BJ (cell line): ENCODE measurements at regions of chr3 and their contacts with region 1.

Region 1: GRCh38 chr3:50542177-50543034 is 25.1 kb downstream of the C3orf18 start:
- DNase-seq: no peak
- H3K4me3 ChIP-seq: no peak overlapping the region
- H3K27me3 ChIP-seq: peaks cover 9% of the 10 kb centered on the region
- CTCF ChIP-seq: peak; percentile 93

Region 2: DNA sequence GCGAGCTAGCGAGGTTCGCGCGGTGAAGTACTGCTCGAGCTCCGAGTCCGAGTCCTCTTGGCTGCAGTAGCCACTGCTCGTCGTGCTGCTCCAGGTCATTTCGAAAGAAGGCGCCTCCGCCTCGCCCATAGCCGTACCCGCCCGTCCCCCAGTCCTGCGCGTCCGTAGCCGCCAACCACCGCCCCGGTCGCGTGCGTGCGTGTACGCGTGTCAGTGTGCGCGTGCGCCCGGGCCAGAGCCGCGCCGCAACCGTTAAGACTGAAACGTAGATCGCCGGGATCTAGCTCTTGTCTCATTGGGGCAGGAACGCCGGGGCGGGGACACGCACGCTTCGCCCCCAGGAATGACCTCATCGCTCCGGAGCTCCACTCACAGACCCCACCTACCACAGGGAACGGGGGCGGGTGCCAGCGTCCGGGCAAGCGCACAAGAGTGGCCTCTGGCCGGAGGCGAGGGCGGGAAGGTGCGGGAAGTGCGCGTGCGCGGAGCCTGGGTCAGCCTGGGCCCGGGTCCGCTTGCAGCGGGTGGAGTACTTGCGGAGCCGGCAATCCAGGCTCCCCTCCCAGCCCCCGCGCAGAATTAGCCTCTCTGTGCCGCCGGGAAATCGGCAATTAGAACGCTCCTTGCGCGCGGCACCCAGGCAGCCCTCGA is 205.1 kb before region 1 on chr3:
- CTCF ChIA-PET with region 1: interaction called, 10 read pairs
- POLR2A ChIA-PET with region 1: no interaction called
- DNase-seq: peak; percentile 97
- H3K4me3 ChIP-seq: peak overlapping the region; percentile 89
- H3K27me3 ChIP-seq: no peaks in the 10 kb centered on the region
- CTCF ChIP-seq: no peak

Region 3: DNA sequence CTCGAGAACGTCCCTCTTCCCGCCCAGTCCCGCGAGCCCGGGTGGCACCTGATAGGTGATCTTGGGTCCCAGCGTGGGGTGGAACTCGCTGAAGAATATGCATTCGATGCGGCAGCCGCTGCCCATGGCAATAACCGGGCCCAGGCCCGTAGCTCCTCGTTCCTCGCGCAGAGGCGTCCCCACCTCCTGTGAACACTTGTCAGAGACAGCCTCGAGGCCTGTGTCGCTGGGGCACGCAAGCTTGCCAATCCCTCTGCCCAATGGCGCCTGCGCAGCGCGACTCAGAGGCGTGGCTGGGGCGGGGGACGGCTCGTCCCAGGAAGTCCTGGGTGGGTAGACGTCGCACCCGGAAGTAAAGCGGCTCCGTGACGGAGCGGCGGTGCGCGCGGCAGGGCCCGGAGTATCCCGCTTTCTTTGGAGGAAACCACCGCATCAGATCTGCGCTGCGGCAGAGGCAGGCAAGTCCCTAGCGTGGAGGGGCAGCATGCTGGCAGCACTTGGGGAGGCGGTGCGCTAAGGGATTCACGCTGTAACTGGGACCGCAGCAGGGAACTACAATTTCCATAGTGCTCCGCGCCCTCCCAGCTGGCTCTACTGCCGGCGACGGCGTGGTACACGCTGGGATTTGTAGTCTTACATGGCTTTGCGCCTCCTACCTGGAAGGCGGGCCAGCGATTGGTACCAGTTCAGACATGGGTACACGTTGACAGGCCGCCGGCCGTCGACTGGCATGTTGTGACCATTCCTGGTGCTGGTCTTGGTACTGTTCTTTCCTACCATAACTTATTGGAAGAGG is 191.7 kb before region 1 on chr3 and contains the starts of genes CYB561D2 and NPRL2:
- CTCF ChIA-PET with region 1: interaction called, 98 read pairs
- POLR2A ChIA-PET with region 1: no interaction called
- DNase-seq: peak; percentile 68
- H3K4me3 ChIP-seq: peak within 1 kb of the TSS; percentile 85
- H3K27me3 ChIP-seq: no peaks in the 10 kb centered on the region
- CTCF ChIP-seq: no peak
- polyA plus RNA-seq, gene CYB561D2: 22.3 and 39.3 TPM in 2 replicates
- polyA plus RNA-seq, gene NPRL2: 31.4 and 45.0 TPM in 2 replicates

Region 4: DNA sequence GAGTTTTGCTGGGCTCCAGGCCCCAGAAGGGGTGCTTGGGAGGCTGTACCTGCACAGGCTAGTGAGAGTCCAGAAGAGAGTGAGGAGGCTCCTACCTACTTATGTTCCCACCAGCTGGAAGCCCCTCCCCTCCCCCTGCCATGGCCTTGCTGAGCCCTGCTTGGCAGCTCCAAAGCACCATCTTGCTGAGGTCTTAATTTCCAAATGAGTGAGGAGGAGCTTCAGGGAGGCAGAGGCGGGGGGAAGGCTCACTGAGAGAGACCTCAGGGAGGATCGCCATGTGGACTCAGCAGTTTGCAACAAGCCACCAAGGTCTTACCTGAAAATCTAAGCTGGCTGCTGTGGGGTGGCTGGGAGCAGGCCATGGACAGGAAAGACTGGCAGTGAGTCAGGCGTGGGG is 30.3 kb before region 1 on chr3:
- CTCF ChIA-PET with region 1: interaction called, 22 read pairs
- POLR2A ChIA-PET with region 1: no interaction called
- DNase-seq: no peak
- H3K4me3 ChIP-seq: no peak overlapping the region
- H3K27me3 ChIP-seq: peaks cover 30% of the 10 kb centered on the region
- CTCF ChIP-seq: no peak

Region 5: DNA sequence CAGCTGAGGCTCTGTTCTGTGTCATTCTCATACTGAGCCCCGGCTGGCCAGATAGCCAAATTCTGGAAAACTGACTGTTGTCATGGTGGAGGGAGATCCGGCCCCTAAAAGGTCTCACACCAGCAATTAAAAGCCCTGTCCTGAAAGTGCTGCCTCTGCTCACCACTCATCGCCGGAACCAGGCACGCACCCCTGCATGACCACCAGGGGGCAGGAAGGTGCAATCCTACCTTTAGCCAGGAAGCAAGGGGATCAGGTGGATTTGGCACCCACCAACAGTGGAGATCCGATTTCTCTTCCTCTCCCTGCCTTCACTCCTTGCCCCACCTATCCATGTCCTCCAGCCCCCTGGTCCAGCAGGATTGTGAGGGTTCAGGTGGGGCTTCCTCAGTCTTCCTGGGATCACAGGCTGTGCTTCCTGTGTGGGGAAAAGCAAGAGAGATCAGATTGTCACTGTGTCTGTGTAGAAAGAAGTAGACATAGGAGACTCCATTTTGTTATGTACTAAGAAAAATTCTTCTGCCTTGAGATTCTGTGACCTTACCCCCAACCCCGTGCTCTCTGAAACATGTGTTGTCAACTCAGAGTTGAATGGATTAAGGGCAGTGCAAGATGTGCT is 22.8 kb before region 1 on chr3:
- CTCF ChIA-PET with region 1: interaction called, 46 read pairs
- POLR2A ChIA-PET with region 1: no interaction called
- DNase-seq: no peak
- H3K4me3 ChIP-seq: no peak overlapping the region
- H3K27me3 ChIP-seq: peaks cover 16% of the 10 kb centered on the region
- CTCF ChIP-seq: peak; percentile 94

Region 6: DNA sequence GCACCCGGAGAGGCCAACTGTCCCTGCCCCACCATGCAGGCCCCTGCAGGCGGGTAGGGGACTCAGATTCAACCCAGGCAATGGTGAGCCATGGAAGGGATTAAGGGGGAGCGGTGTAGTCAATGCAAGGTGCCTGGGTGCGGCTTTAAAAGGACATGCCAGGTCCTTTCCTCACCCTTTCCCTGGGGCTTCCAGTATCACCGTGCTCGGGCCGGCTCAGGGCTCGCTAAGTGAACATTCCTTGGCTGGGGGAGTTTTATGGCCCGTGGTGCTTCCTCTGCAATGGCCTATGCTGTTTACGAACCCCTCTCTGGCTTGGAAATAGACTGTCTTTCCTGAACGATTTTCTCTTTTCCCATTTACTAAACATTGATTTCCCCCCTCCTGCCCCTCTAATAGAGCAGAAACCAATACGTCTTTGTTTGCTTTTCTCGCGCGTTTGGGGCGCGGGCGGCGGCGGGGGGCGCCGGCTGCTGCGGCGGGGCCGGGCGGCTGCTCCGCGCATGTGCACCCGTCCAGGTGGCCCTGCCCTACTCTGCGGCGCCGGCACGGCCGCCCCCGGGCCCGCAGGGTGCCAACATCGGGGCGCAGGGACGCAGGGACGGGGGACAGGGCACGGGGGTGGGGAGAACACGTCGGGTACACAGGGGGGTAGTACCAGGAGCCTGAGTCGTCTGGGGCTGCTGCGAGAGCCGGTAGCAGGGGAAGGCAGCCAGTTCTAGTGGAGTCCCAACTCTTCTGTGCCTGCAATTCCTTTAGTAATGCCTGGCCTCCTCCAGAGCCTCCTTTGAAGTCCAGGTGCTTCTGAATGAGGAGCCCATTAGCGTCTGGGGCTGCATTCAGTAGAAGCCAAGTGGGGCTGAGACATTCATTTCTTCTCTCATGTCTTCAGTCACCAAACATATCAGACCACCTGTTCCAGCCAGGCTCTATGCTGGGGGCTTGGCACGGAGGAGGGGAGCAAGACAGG is 12.1 kb before region 1 on chr3:
- CTCF ChIA-PET with region 1: interaction called, 46 read pairs
- POLR2A ChIA-PET with region 1: no interaction called
- DNase-seq: no peak
- H3K4me3 ChIP-seq: no peak overlapping the region
- H3K27me3 ChIP-seq: peaks cover 18% of the 10 kb centered on the region
- CTCF ChIP-seq: no peak

Region 7: GRCh38 chr3:50759015-50759414 is 216.6 kb after region 1 on chr3:
- CTCF ChIA-PET with region 1: no interaction called
- POLR2A ChIA-PET with region 1: no interaction called
- DNase-seq: no peak
- H3K4me3 ChIP-seq: no peak overlapping the region
- H3K27me3 ChIP-seq: no peaks in the 10 kb centered on the region
- CTCF ChIP-seq: no peak